Transverse colon (tissue), 4 donors: ENCODE measurements at regions of chr4 and their contacts with region 1.

Region 1: GRCh38 chr4:145936142-145936996 is 2.3 kb downstream of the ZNF827 start:
- DNase-seq: peak; percentile 75
- H3K4me3 ChIP-seq: peak overlapping the region; percentile 67 to 88 (median 75)
- H3K27ac ChIP-seq: peak overlapping the region; percentile 89 to 97 (median 96)
- H3K4me1 ChIP-seq: peaks cover 12 to 30% (median 16%) of the 10 kb centered on the region in 4 donors
- H3K27me3 ChIP-seq: no peaks in the 10 kb centered on the region
- CTCF ChIP-seq: peak; percentile 18 to 65 (median 24)
- EP300 ChIP-seq: no peak
- POLR2A ChIP-seq: peak; percentile 46

Region 2: DNA sequence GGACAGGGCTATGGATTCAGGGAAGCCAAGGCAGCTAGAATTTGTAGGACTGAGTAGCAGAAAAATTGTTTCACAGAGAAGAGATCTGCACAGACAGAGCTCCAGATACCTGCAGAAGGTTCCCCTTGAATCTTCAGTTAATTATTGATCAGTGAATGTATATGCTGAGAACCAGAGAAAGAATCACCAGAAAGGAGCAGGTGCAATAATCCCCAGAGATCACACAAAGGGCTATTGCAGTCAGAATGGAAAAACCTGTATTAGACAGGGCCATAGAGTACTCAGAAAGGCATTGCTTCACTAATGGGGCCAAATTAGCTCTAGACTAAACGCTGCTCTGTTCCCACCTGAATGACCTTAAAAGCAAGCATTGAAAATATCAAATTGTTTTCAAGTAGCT is 490.2 kb before region 1 on chr4:
- in situ Hi-C with region 1: no loop called
- intact Hi-C with region 1: no loop called
- DNase-seq: no peak
- H3K4me3 ChIP-seq: no peak overlapping the region
- H3K27ac ChIP-seq: no peak overlapping the region
- H3K4me1 ChIP-seq: no peaks in the 10 kb centered on the region
- H3K27me3 ChIP-seq: no peaks in the 10 kb centered on the region
- CTCF ChIP-seq: no peak
- EP300 ChIP-seq: no peak
- POLR2A ChIP-seq: no peak

Region 3: GRCh38 chr4:145732895-145733880 is 203.2 kb before region 1 on chr4:
- in situ Hi-C with region 1: no loop called
- intact Hi-C with region 1: loop called (anchors 10 kb)
- DNase-seq: peak; percentile 95
- H3K4me3 ChIP-seq: peak overlapping the region; percentile 56 to 87 (median 60)
- H3K27ac ChIP-seq: peak overlapping the region; percentile 92 to 96 (median 93)
- H3K4me1 ChIP-seq: peaks cover 17 to 62% (median 49%) of the 10 kb centered on the region in 4 donors
- H3K27me3 ChIP-seq: no peaks in the 10 kb centered on the region
- CTCF ChIP-seq: peak in 1 of 5 experiments; percentile 20
- EP300 ChIP-seq: no peak
- POLR2A ChIP-seq: peak; percentile 77

Region 4: DNA sequence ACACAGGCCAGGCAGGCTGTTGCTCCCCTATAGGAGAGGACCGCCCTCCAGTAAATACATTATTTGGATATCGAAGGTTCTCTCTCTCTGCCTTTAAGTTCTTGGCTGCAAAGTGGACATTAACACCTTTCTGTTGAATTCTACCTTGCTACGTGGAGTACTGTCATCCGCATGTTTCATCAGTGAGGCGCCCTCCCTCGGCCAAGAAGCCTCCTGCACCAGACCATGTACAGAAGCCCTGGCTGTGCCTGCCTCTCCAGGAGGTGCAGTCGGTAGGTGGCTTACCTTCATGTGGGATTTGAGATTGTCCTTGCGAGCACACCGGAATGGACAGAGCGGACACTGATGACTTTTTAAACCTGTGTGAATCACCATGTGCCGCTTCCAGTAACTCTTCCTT is 44.4 kb before region 1 on chr4:
- in situ Hi-C with region 1: no loop called
- intact Hi-C with region 1: loop called (anchors 1 kb)
- DNase-seq: no peak
- H3K4me3 ChIP-seq: no peak overlapping the region
- H3K27ac ChIP-seq: no peak overlapping the region
- H3K4me1 ChIP-seq: peaks cover 0 to 7% (median 0%) of the 10 kb centered on the region in 4 donors
- H3K27me3 ChIP-seq: no peaks in the 10 kb centered on the region
- CTCF ChIP-seq: no peak
- EP300 ChIP-seq: no peak
- POLR2A ChIP-seq: no peak

Region 5: DNA sequence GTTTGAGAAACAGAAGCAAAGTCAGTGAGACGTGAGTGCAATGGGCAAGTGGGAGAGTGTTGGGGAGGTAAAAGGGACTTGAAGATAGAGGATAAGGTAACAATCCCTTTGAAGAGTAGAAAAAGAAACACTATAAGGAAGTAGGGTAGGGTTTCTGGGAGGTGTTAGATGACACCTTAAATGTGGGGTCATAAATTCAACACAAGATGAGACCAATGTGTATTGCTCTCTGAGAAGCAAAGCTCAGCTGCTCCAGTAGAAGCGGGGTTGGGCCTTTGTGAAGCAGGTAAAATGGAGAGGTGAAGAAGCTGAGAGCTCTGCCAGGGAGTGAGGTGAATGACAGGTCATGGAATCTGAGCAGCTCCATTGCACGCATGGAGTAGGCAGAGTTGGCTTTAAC is 363.2 kb after region 1 on chr4:
- in situ Hi-C with region 1: no loop called
- intact Hi-C with region 1: no loop called
- DNase-seq: no peak
- H3K4me3 ChIP-seq: no peak overlapping the region
- H3K27ac ChIP-seq: no peak overlapping the region
- H3K4me1 ChIP-seq: no peaks in the 10 kb centered on the region
- H3K27me3 ChIP-seq: no peaks in the 10 kb centered on the region
- CTCF ChIP-seq: no peak
- EP300 ChIP-seq: no peak
- POLR2A ChIP-seq: no peak